IMR-90 (cell line): ENCODE measurements at regions of chr7 and their contacts with region 1.

Region 1: DNA sequence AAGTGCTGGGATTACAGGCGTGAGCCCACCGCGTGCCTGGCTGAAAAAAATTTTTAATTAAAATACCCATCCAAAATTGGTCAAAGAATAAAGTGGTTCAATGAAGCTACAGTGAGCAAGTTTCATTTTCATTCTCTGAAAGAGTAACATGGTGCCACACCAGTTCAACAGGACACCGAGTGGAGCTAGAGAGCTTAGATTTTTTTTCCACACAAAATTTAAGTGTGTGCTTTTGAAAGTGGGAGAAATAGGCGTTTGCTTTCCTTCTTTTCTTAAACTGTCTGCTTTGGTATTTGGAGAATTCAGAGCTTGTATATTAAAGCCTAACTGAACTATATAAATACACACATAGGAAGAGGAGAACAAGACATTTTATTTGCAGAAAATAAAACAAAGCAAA is 43.4 kb downstream of the BPGM start:
- DNase-seq: peak; percentile 81
- ATAC-seq: peak; percentile 77
- H3K4me3 ChIP-seq: no peak overlapping the region
- H3K27ac ChIP-seq: peak overlapping the region; percentile 70; the same call in 1 of the 2 replicates
- H3K4me1 ChIP-seq: peaks cover 31% of the 10 kb centered on the region
- H3K27me3 ChIP-seq: no peaks in the 10 kb centered on the region
- CTCF ChIP-seq: peak; percentile 77
- POLR2A ChIP-seq: no peak
- RAD21 ChIP-seq: peak; percentile 79

Region 2: GRCh38 chr7:134262322-134262721 is 427.7 kb before region 1 on chr7:
- CTCF ChIA-PET with region 1: no interaction called
- POLR2A ChIA-PET with region 1: no interaction called
- dilution Hi-C with region 1: no loop called
- in situ Hi-C with region 1: no loop called
- intact Hi-C with region 1: no loop called
- DNase-seq: no peak
- ATAC-seq: no peak
- H3K4me3 ChIP-seq: no peak overlapping the region
- H3K27ac ChIP-seq: no peak overlapping the region
- H3K4me1 ChIP-seq: no peaks in the 10 kb centered on the region
- H3K27me3 ChIP-seq: peaks cover 4% of the 10 kb centered on the region; the same call in 1 of the 2 replicates
- CTCF ChIP-seq: no peak
- POLR2A ChIP-seq: no peak
- RAD21 ChIP-seq: no peak

Region 3: DNA sequence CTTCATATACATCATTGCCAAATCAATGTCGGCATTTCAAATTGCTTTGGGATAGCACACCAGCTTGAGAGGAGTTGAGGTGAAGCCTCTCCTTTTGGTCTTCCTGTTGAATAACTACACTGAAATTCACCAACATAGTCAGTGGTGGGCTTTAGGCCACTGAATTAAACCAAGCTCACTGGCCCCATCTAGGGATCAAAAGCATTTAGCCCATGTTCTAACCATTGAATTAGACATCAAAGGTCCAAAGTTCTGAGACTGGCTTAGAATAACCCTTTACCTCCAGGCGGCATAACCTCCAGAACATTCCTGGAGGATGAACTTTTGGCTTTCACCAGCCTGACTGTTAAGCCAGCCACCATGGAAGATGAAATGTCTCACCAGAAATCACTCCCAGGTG is 11.3 kb after region 1 on chr7:
- CTCF ChIA-PET with region 1: interaction called, 11 read pairs
- POLR2A ChIA-PET with region 1: no interaction called
- dilution Hi-C with region 1: no loop called
- in situ Hi-C with region 1: no loop called
- intact Hi-C with region 1: no loop called
- DNase-seq: peak; percentile 42
- ATAC-seq: 0 out of 2 replicates have a peak, but pooled peaks have one; percentile 36
- H3K4me3 ChIP-seq: no peak overlapping the region
- H3K27ac ChIP-seq: no peak overlapping the region
- H3K4me1 ChIP-seq: no peaks in the 10 kb centered on the region
- H3K27me3 ChIP-seq: no peaks in the 10 kb centered on the region
- CTCF ChIP-seq: peak; percentile 50
- POLR2A ChIP-seq: no peak
- RAD21 ChIP-seq: peak; percentile 54

Region 4: DNA sequence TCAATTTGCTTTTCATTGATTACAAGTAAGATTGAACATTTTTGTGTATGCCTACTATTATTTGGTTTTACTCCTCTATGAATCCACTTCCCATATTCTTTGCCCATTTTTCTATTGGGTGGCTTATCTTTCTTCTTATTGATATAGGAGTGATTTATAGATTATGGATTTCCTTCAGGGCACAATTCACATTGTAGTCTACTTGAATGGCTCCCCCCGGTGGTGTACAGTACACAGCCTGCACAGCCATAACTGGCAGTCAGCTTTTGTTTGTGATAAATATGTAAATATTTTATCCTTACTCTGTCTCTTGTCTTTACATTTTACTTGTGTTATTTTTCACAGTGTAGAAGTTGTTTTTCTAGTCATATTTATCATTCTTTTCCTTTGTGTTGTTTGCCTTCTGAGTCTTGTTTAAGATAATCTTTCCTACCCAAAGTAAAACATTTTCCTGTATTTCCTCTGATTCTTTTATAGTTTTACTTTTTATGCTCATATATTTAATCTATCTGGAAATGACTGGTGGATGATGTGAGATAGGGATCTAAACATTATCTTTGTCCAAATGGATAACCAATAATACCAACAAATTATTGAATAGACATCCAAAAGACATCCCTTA is 65.5 kb after region 1 on chr7:
- CTCF ChIA-PET with region 1: interaction called, 16 read pairs
- POLR2A ChIA-PET with region 1: interaction called, 4 read pairs
- dilution Hi-C with region 1: no loop called
- in situ Hi-C with region 1: no loop called
- intact Hi-C with region 1: loop called (anchors 1 kb)
- DNase-seq: no peak
- ATAC-seq: peak; percentile 78
- H3K4me3 ChIP-seq: no peak overlapping the region
- H3K27ac ChIP-seq: no peak overlapping the region
- H3K4me1 ChIP-seq: peaks cover 5% of the 10 kb centered on the region; the same call in 1 of the 2 replicates
- H3K27me3 ChIP-seq: no peaks in the 10 kb centered on the region
- CTCF ChIP-seq: peak; percentile 68
- POLR2A ChIP-seq: no peak
- RAD21 ChIP-seq: peak; percentile 63

Region 5: GRCh38 chr7:134891262-134891695 is 201.3 kb after region 1 on chr7:
- CTCF ChIA-PET with region 1: no interaction called
- POLR2A ChIA-PET with region 1: interaction called, 3 read pairs
- dilution Hi-C with region 1: no loop called
- in situ Hi-C with region 1: no loop called
- intact Hi-C with region 1: loop called (anchors 1 kb)
- DNase-seq: peak; percentile 92
- ATAC-seq: peak; percentile 72
- H3K4me3 ChIP-seq: peak overlapping the region; percentile 46
- H3K27ac ChIP-seq: peak overlapping the region; percentile 93
- H3K4me1 ChIP-seq: peaks cover 32% of the 10 kb centered on the region
- H3K27me3 ChIP-seq: no peaks in the 10 kb centered on the region
- CTCF ChIP-seq: no peak
- POLR2A ChIP-seq: no peak
- RAD21 ChIP-seq: no peak

Region 6: DNA sequence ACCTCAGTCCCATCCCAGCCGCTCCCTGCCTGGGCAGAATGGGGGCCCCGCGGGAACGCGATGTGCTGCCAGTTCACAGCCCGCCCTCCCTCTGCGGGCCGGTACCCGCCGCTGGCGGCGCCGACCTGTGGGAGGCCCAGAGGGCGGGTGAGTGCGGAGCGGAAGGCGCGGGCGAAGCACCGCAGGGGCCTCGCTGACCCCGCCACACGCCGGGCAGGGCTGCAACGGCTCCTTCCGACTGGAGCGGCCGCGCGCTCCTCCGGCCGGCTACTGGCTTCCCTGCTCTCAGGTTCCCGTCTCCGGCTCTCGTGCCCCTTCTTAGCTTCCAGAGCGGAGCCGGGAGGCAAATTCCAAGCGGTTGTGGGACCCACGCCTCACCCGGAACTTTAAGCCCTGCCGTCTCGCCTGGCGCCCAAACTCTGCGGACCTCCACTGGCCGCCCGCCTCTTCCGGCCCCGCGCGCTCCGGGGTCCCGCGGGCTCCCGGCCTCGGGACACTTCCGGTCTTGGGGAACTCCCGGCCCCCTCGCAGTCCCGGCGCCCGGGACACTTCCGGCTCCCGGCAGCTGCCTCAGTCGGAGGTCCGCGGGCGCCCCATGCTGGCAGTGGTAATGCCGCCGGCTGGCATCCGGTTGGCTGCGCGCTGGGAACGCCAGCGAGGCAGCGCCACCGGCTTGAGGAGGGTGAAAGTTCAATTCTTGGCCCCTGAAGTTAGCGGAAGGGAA is 480.4 kb after region 1 on chr7 and contains the start of gene CYREN:
- CTCF ChIA-PET with region 1: interaction called, 6 read pairs
- POLR2A ChIA-PET with region 1: no interaction called
- dilution Hi-C with region 1: no loop called
- in situ Hi-C with region 1: loop called (anchors 10 kb)
- intact Hi-C with region 1: loop called (anchors 2 kb)
- DNase-seq: peak; percentile 93
- ATAC-seq: peak; percentile 94
- H3K4me3 ChIP-seq: peak within 1 kb of the TSS; percentile 91
- H3K27ac ChIP-seq: peak within 1 kb of the TSS; percentile 96
- H3K4me1 ChIP-seq: peaks cover 12% of the 10 kb centered on the region
- H3K27me3 ChIP-seq: no peaks in the 10 kb centered on the region
- CTCF ChIP-seq: peak; percentile 83
- POLR2A ChIP-seq: peak; percentile 75
- RAD21 ChIP-seq: peak; percentile 75
- total RNA-seq, gene CYREN: 26.5 and 33.1 TPM in 2 replicates

Region 7: DNA sequence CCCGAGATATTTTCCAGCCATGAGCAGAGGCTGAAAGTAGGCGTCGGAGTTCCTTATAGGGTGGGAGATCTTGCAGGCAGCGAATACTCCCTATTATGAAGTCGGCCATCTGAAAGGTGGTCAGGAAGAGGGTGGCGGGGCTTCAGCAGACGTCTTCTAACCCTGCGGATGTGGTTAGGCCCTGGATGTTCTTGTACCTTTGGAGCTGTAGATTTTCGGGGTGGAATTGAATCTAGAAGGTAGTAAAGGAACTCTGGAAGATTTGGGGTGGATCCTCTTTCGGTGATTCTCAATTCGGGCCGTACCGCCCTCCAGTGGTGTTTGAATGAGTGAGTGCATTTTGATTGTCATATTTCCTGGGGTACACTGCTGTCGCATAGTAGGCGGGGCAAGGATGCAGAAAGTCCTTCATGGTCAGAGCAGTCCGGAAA is 868.3 kb after region 1 on chr7:
- CTCF ChIA-PET with region 1: no interaction called
- POLR2A ChIA-PET with region 1: no interaction called
- dilution Hi-C with region 1: no loop called
- in situ Hi-C with region 1: loop called (anchors 25 kb)
- intact Hi-C with region 1: loop called (anchors 10 kb)
- DNase-seq: peak; percentile 40
- ATAC-seq: peak; percentile 56
- H3K4me3 ChIP-seq: peak overlapping the region; percentile 69
- H3K27ac ChIP-seq: peak overlapping the region; percentile 79
- H3K4me1 ChIP-seq: no peaks in the 10 kb centered on the region
- H3K27me3 ChIP-seq: no peaks in the 10 kb centered on the region
- CTCF ChIP-seq: peak; percentile 59
- POLR2A ChIP-seq: no peak
- RAD21 ChIP-seq: peak; percentile 52